H1 (cell line): ENCODE measurements at regions of chr11 and their contacts with region 1.

Region 1: GRCh38 chr11:127470306-127470884 is 469.8 kb upstream of the KIRREL3 start:
- DNase-seq: peak in 1 of 2 experiments; percentile 49
- H3K4me3 ChIP-seq: no peak overlapping the region
- H3K27ac ChIP-seq: no peak overlapping the region
- H3K4me1 ChIP-seq: no peaks in the 10 kb centered on the region
- H3K27me3 ChIP-seq: no peaks in the 10 kb centered on the region
- CTCF ChIP-seq: peak in 2 of 3 experiments; percentile 60 to 67; a peak in 3 of 4 replicates
- EP300 ChIP-seq: no peak
- POLR2A ChIP-seq: no peak
- RAD21 ChIP-seq: peak; percentile 78 to 79

Region 2: DNA sequence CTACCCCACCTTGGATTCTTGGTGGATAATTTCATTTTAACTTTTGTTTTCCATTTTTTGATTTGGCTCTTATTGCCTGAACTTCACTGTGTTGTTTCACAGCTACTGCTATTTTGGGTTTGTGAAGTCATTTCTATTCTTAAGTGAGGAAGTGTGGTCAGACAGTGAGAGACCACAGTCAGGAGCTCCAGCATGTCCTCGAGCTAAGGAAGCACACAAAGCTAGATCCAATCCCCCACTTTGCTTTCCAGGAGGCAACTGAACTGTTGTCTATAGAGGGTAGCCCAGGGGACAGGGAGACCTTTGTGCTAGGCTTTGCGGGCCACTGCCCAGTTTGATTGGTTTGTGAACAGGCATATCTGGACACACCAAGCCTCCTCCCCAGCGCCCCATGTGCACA is 218.1 kb before region 1 on chr11:
- CTCF ChIA-PET with region 1: no interaction called
- POLR2A ChIA-PET with region 1: no interaction called
- DNase-seq: no peak
- H3K4me3 ChIP-seq: no peak overlapping the region
- H3K27ac ChIP-seq: no peak overlapping the region
- H3K4me1 ChIP-seq: peaks cover 0 to 2% (median 0%) of the 10 kb centered on the region in 4 experiments; a peak in 1 of 7 replicates
- H3K27me3 ChIP-seq: no peaks in the 10 kb centered on the region
- CTCF ChIP-seq: no peak
- EP300 ChIP-seq: no peak
- POLR2A ChIP-seq: no peak
- RAD21 ChIP-seq: no peak

Region 3: GRCh38 chr11:127451861-127452260 is 18.5 kb before region 1 on chr11:
- CTCF ChIA-PET with region 1: interaction called, 11 read pairs
- POLR2A ChIA-PET with region 1: no interaction called
- DNase-seq: no peak
- H3K4me3 ChIP-seq: no peak overlapping the region
- H3K27ac ChIP-seq: no peak overlapping the region
- H3K4me1 ChIP-seq: peaks cover 0 to 5% (median 1%) of the 10 kb centered on the region in 4 experiments; a peak in 1 of 7 replicates
- H3K27me3 ChIP-seq: no peaks in the 10 kb centered on the region
- CTCF ChIP-seq: no peak
- EP300 ChIP-seq: no peak
- POLR2A ChIP-seq: no peak
- RAD21 ChIP-seq: no peak

Region 4: GRCh38 chr11:127481391-127481790 is 11.0 kb after region 1 on chr11:
- CTCF ChIA-PET with region 1: interaction called, 18 read pairs
- POLR2A ChIA-PET with region 1: no interaction called
- DNase-seq: no peak
- H3K4me3 ChIP-seq: no peak overlapping the region
- H3K27ac ChIP-seq: no peak overlapping the region
- H3K4me1 ChIP-seq: no peaks in the 10 kb centered on the region
- H3K27me3 ChIP-seq: no peaks in the 10 kb centered on the region
- CTCF ChIP-seq: no peak
- EP300 ChIP-seq: no peak
- POLR2A ChIP-seq: no peak
- RAD21 ChIP-seq: no peak

Region 5: GRCh38 chr11:127493330-127494022 is 23.1 kb after region 1 on chr11:
- CTCF ChIA-PET with region 1: interaction called, 12 read pairs
- POLR2A ChIA-PET with region 1: no interaction called
- DNase-seq: no peak
- H3K4me3 ChIP-seq: no peak overlapping the region
- H3K27ac ChIP-seq: no peak overlapping the region
- H3K4me1 ChIP-seq: no peaks in the 10 kb centered on the region
- H3K27me3 ChIP-seq: no peaks in the 10 kb centered on the region
- CTCF ChIP-seq: peak in 2 of 3 experiments; percentile 47 to 57; a peak in 3 of 4 replicates
- EP300 ChIP-seq: no peak
- POLR2A ChIP-seq: no peak
- RAD21 ChIP-seq: peak; percentile 44 to 64; a peak in 3 of 4 replicates

Region 6: GRCh38 chr11:127574478-127574877 is 104.1 kb after region 1 on chr11:
- CTCF ChIA-PET with region 1: no interaction called
- POLR2A ChIA-PET with region 1: no interaction called
- DNase-seq: peak in 1 of 2 experiments; percentile 51
- H3K4me3 ChIP-seq: no peak overlapping the region
- H3K27ac ChIP-seq: no peak overlapping the region
- H3K4me1 ChIP-seq: peaks cover 0 to 8% (median 3%) of the 10 kb centered on the region in 4 experiments; a peak in 3 of 7 replicates
- H3K27me3 ChIP-seq: no peaks in the 10 kb centered on the region
- CTCF ChIP-seq: no peak
- EP300 ChIP-seq: no peak
- POLR2A ChIP-seq: no peak
- RAD21 ChIP-seq: no peak